ENCODE measurements at regions of chr2 and their contacts with region 1.

Region 1: GRCh38 chr2:217713395-217714286 is 289.2 kb downstream of the TNS1 start:
- DNase-seq: peak; percentile 84
- ATAC-seq: peak; percentile 90
- H3K4me3 Mint-ChIP-seq: no peak overlapping the region
- H3K27ac Mint-ChIP-seq: no peak overlapping the region
- H3K4me1 Mint-ChIP-seq: peaks cover 4% of the 10 kb centered on the region
- H3K27me3 Mint-ChIP-seq: no peaks in the 10 kb centered on the region
- CTCF ChIP-seq: peak; percentile 87

Region 2: DNA sequence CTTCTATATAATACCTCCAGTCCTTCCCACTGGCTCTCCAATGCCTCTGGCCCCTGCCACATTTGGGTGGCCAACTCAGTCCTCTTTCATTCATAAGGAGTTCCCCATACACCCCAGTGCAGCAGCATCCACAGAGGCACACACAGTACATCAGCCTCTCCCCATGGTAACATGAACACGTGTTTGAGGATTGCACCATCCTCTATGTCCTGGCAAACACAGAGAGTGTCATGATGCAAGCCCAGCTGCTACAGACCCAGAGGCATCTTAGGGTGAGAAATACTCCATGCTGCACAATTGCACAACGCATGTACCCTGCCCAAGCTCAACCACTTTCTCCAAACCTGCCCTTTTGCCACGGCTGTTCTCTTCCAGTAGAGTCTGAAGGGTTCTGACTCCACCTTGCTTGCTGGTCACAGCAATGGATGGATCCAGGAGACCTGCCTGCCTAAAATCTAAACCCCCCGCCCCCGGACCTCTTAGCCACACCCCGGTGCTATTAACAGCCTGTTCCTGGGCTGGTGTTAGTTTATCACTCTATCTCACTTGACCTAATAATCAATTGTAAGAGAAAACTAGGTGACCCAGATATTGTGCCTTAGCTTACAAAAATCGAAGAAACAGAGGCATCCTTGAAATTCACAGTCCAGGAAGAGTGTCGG is 1029.7 kb before region 1 on chr2:
- CTCF ChIA-PET with region 1: interaction called, 9 read pairs
- POLR2A ChIA-PET with region 1: no interaction called
- intact Hi-C with region 1: loop called (anchors 5 kb)
- DNase-seq: no peak
- ATAC-seq: no peak
- H3K4me3 Mint-ChIP-seq: no peak overlapping the region
- H3K27ac Mint-ChIP-seq: no peak overlapping the region
- H3K4me1 Mint-ChIP-seq: peaks cover 7% of the 10 kb centered on the region
- H3K27me3 Mint-ChIP-seq: peaks cover 25% of the 10 kb centered on the region
- CTCF ChIP-seq: no peak

Region 3: DNA sequence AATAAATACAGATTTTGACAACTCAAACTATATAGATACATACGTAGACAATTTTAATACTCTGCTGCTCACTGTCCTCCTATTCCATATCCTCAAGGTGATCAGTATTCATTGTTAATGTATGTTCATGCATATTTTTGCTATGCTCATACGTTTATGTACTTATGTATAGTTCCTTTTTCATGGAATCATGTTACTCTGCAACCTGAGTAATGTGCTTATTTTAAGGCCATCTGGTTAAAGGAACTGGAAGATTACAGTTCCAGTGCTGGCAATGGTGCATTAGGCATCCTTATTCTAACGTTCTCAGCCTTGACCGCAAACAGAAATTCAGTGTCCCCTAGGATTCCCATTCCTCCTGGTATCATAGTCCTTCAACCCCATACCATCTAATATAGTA is 468.8 kb before region 1 on chr2:
- CTCF ChIA-PET with region 1: no interaction called
- POLR2A ChIA-PET with region 1: no interaction called
- intact Hi-C with region 1: no loop called
- DNase-seq: no peak
- ATAC-seq: no peak
- H3K4me3 Mint-ChIP-seq: no peak overlapping the region
- H3K27ac Mint-ChIP-seq: no peak overlapping the region
- H3K4me1 Mint-ChIP-seq: peaks cover 11% of the 10 kb centered on the region
- H3K27me3 Mint-ChIP-seq: peaks cover 13% of the 10 kb centered on the region
- CTCF ChIP-seq: no peak

Region 4: DNA sequence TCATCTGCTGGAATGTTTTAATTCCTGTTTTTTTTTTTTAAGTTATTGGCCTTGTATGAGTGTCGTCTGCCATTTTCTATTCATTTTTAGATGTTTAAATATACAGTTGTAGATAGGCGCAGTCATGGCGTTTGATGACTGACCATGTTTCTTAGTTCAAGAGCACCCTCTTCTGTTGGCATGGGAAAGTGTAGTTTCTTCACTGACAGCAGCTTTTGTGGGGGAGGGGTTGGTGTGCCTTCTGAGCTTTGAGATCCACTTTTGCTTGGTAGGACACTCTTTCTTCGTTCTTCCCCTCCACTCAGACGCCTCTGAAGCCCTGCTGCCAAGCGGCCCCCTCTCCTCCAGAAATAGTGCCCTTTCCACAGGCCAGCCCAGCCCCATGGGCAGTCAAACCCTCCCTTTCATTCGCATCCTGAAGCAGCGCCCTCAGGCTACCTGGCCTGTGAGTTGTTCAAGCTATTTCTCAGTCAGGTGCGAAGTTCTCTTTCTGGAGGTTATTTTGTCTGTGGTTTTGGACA is 202.8 kb before region 1 on chr2:
- CTCF ChIA-PET with region 1: interaction called, 12 read pairs
- POLR2A ChIA-PET with region 1: no interaction called
- intact Hi-C with region 1: loop called (anchors 5 kb)
- DNase-seq: peak; percentile 69
- ATAC-seq: peak; percentile 89
- H3K4me3 Mint-ChIP-seq: no peak overlapping the region
- H3K27ac Mint-ChIP-seq: no peak overlapping the region
- H3K4me1 Mint-ChIP-seq: peaks cover 8% of the 10 kb centered on the region
- H3K27me3 Mint-ChIP-seq: peaks cover 1% of the 10 kb centered on the region
- CTCF ChIP-seq: peak; percentile 70

Region 5: DNA sequence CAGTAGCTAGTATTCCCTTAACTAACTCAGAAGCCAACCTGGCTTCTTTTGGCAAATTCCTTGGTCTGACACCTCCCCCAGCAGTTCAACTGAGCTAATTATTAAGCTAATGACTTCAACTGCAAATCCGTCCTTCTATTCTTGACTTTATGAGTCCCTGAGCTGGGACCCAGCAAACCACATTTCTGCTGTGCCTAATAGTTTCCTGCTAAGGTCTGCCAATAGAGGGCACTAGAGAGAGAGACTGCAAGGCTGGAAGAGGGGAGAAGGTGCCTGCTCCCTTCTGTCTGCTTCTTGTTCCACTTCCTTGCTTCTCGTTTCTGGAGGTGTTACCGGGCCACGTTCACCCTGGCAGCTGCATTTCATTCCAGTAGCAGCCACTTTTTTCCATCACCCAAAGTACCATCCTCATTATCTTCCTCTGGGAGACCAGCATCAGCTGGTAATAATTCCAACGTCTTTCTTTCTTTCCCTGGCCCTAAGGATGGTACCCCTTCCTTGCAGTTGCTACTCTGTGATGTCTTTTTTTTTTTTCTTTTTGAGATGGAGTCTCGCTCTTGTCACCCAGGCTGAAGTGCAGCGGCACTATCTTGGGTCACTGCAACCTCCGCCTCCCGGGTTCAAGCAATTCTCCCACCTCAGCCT is 62.8 kb before region 1 on chr2:
- CTCF ChIA-PET with region 1: interaction called, 40 read pairs
- POLR2A ChIA-PET with region 1: no interaction called
- intact Hi-C with region 1: no loop called
- DNase-seq: peak; percentile 42
- ATAC-seq: peak; percentile 92
- H3K4me3 Mint-ChIP-seq: no peak overlapping the region
- H3K27ac Mint-ChIP-seq: no peak overlapping the region
- H3K4me1 Mint-ChIP-seq: peaks cover 9% of the 10 kb centered on the region
- H3K27me3 Mint-ChIP-seq: no peaks in the 10 kb centered on the region
- CTCF ChIP-seq: peak; percentile 75

Region 6: GRCh38 chr2:217703102-217703501 is 10.5 kb before region 1 on chr2:
- CTCF ChIA-PET with region 1: interaction called, 17 read pairs
- POLR2A ChIA-PET with region 1: interaction called, 3 read pairs
- intact Hi-C with region 1: no loop called
- DNase-seq: no peak
- ATAC-seq: no peak
- H3K4me3 Mint-ChIP-seq: no peak overlapping the region
- H3K27ac Mint-ChIP-seq: no peak overlapping the region
- H3K4me1 Mint-ChIP-seq: no peaks in the 10 kb centered on the region
- H3K27me3 Mint-ChIP-seq: peaks cover 3% of the 10 kb centered on the region
- CTCF ChIP-seq: no peak

Measured in activated CD8-positive, alpha-beta T cell treated with anti-CD3 and anti-CD28 coated beads for 36 hours (primary cell).